Calu3 (cell line): ENCODE measurements at regions of chr10 and their contacts with region 1.

Region 1: GRCh38 chr10:75019370-75019769 is 92.1 kb upstream of the SAMD8 start:
- DNase-seq: no peak
- H3K4me3 Mint-ChIP-seq: no peak overlapping the region
- H3K27ac Mint-ChIP-seq: no peak overlapping the region
- H3K4me1 Mint-ChIP-seq: peaks cover 12% of the 10 kb centered on the region
- H3K27me3 Mint-ChIP-seq: no peaks in the 10 kb centered on the region
- CTCF ChIP-seq: peak; percentile 22

Region 2: DNA sequence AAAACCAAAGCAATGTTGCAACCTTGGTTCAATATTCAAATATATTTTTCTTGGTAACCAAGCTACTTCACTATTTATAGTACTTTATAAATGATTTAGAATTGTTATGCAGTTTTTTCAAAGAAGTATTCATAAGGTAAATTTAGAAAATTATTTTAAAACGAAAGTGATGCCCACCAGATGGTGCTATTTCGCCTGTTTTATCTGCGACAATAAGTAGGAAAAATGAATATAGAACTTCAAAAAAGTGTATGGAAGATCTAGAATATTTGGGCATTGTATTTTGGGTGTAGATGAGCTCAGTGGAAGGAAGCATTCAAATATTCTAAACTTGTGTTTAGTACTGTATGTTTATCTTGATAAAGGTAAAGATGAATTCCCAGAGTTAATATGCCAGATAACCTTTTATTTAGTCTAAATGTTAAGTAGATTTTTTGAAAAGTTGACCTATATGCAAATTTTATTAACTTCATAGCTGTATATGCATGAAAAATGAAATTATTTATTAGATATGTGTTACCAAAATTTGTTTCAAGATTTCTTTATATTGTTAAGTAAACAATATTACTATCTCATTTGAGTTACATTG is 775.2 kb before region 1 on chr10:
- CTCF ChIA-PET with region 1: no interaction called
- intact Hi-C with region 1: loop called (anchors 2 kb)
- DNase-seq: peak; percentile 30
- H3K4me3 Mint-ChIP-seq: no peak overlapping the region
- H3K27ac Mint-ChIP-seq: no peak overlapping the region
- H3K4me1 Mint-ChIP-seq: peaks cover 20% of the 10 kb centered on the region
- H3K27me3 Mint-ChIP-seq: no peaks in the 10 kb centered on the region
- CTCF ChIP-seq: peak; percentile 67

Region 3: DNA sequence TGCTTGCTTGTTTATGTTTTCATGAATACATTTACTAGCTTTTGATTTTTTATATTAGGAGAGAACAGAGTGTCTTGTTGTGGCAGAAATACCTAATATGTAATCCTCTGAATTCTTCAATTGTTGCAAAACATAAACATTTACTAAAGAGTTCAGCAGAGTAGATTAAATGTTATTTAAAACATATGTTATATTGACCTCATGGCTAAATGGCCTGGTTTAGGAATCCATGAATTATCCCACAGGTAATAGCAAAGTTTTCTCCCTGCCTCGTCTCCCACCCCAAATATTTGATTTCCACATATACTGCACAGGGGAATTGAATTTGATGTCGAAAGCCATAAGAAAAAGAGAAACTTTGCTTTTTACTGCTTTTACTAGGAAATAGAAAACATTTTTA is 756.5 kb before region 1 on chr10:
- CTCF ChIA-PET with region 1: no interaction called
- intact Hi-C with region 1: loop called (anchors 1 kb)
- DNase-seq: no peak
- H3K4me3 Mint-ChIP-seq: no peak overlapping the region
- H3K27ac Mint-ChIP-seq: no peak overlapping the region
- H3K4me1 Mint-ChIP-seq: peaks cover 6% of the 10 kb centered on the region
- H3K27me3 Mint-ChIP-seq: no peaks in the 10 kb centered on the region
- CTCF ChIP-seq: no peak

Region 4: DNA sequence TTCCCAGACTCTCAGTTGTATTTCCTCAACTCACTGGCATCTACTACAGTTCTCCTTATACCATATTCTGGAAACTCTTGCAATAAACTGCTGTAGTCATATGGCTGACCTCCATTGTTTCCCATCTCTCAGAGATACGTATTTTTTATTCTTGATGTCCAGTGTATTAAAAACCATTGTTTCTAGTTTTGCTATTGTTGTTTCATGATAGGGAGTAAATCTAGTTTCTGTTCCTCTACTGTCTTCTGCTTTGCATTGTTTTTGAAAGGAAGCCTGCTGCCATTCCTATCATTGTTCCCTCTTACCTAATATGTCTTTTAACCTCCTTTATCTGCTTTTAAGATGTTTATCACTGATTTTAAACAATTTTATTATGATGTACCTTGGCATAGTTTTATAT is 613.4 kb before region 1 on chr10:
- CTCF ChIA-PET with region 1: no interaction called
- intact Hi-C with region 1: no loop called
- DNase-seq: no peak
- H3K4me3 Mint-ChIP-seq: no peak overlapping the region
- H3K27ac Mint-ChIP-seq: no peak overlapping the region
- H3K4me1 Mint-ChIP-seq: no peaks in the 10 kb centered on the region
- H3K27me3 Mint-ChIP-seq: no peaks in the 10 kb centered on the region
- CTCF ChIP-seq: no peak

Region 5: DNA sequence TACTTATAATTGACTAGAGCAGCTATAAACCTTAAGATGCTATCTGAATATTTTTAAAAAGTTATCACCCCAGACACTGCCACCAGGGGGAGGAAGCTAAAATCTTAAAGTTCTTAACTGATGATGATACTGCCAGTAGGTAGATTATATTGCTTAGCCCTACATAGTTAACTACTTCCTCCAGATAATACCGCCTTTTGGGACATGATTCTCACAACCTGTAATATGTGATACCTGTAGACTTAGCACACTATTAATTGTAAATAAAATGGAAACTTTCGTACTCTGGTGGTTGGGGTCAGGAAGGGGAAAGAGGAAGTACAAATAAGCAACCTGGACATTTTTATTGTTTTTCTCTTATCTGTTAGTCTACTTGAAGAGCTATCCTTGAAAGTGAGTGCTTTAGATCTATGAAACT is 599.4 kb before region 1 on chr10:
- CTCF ChIA-PET with region 1: no interaction called
- intact Hi-C with region 1: loop called (anchors 5 kb)
- DNase-seq: peak; percentile 44
- H3K4me3 Mint-ChIP-seq: no peak overlapping the region
- H3K27ac Mint-ChIP-seq: no peak overlapping the region
- H3K4me1 Mint-ChIP-seq: no peaks in the 10 kb centered on the region
- H3K27me3 Mint-ChIP-seq: no peaks in the 10 kb centered on the region
- CTCF ChIP-seq: peak; percentile 73

Region 6: DNA sequence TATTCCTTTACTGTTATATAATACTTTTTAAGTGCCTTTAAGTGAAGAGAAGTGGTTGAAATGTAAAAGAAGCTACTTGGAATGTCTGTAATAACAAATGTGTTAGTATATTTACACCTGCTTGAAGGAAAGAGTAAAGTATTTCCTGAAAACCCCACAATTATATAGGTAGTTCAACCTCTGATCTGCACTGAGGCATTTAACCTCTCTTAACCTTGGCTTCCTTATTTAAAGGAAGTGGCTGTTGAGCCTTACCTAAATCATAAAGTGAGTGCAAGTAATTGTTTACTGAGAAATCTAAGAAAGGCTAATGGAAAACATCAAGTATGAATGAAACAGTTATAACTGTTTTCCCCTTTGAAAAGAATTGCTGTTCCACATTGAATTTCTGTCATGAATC is 573.9 kb before region 1 on chr10:
- CTCF ChIA-PET with region 1: no interaction called
- intact Hi-C with region 1: no loop called
- DNase-seq: no peak
- H3K4me3 Mint-ChIP-seq: no peak overlapping the region
- H3K27ac Mint-ChIP-seq: no peak overlapping the region
- H3K4me1 Mint-ChIP-seq: no peaks in the 10 kb centered on the region
- H3K27me3 Mint-ChIP-seq: no peaks in the 10 kb centered on the region
- CTCF ChIP-seq: no peak

Region 7: DNA sequence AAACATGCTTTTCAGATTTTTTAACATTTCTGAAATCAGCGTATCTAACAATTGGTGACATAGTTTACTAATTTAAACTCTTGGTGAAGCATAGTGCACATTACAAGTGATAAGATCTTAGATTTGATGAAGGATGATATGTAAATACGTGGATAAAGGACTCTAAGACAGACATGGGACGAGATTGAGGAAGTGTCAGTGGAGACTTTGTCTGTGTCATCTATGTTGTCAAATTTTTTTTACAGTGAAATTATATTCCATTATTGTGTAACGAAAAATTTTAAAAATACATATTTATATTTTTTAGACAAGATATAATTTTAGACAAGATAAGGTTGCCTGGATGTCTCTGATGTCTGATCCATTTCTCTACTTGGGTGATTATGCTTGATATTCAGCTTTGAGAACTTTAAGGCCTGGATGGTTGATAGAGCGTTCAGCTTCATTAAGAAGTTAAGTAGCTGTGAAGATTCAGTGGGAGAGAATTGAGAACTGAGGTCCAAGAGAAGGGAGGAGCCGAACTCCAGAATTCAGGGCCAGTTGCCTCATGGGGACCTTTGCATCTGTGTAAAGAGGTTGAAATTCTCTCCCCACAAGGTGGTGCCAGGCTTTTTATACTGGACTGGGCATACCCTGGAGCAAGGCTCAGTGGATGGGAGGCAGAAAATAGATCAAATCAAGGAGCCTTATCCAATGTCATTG is 130.3 kb before region 1 on chr10:
- CTCF ChIA-PET with region 1: no interaction called
- intact Hi-C with region 1: loop called (anchors 1 kb)
- DNase-seq: peak; percentile 26
- H3K4me3 Mint-ChIP-seq: no peak overlapping the region
- H3K27ac Mint-ChIP-seq: no peak overlapping the region
- H3K4me1 Mint-ChIP-seq: peaks cover 8% of the 10 kb centered on the region
- H3K27me3 Mint-ChIP-seq: no peaks in the 10 kb centered on the region
- CTCF ChIP-seq: peak; percentile 13

Region 8: DNA sequence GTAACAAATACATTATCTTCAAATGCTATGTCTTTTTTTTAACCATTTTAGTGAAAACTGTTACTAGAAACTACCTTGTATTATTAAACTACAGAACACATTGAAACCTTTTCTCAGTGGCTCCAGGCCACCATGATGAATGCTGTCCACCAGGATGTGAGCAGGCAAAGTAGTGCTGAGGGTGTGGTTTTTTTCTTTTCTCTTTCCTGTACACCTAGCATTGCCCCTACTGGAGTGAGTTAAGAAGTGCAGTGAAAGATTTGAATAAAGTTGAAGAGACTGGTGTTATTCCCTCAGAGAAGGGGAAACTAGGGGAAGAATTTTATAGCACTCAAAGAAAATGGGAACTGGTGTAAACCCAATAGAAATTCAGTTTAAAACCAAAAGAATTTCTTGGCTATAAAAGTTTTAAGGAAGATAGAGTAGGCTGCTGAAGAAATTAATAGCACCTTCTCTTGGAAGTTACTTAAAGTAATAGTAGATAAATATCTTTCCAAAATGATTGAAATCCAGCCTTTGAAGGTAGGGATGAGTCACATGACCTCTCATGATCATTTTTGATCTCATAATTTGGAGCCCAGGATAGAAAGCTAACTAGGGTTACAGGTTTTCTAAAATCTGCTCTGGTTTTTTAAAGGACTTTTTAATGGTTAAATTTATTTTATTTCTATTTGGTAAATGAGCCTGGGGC is 27.8 kb before region 1 on chr10:
- CTCF ChIA-PET with region 1: no interaction called
- intact Hi-C with region 1: loop called (anchors 1 kb)
- DNase-seq: peak; percentile 34
- H3K4me3 Mint-ChIP-seq: no peak overlapping the region
- H3K27ac Mint-ChIP-seq: no peak overlapping the region
- H3K4me1 Mint-ChIP-seq: no peaks in the 10 kb centered on the region
- H3K27me3 Mint-ChIP-seq: no peaks in the 10 kb centered on the region
- CTCF ChIP-seq: peak; percentile 67